ENCODE measurements at regions of chr3 and their contacts with region 1.

Region 1: DNA sequence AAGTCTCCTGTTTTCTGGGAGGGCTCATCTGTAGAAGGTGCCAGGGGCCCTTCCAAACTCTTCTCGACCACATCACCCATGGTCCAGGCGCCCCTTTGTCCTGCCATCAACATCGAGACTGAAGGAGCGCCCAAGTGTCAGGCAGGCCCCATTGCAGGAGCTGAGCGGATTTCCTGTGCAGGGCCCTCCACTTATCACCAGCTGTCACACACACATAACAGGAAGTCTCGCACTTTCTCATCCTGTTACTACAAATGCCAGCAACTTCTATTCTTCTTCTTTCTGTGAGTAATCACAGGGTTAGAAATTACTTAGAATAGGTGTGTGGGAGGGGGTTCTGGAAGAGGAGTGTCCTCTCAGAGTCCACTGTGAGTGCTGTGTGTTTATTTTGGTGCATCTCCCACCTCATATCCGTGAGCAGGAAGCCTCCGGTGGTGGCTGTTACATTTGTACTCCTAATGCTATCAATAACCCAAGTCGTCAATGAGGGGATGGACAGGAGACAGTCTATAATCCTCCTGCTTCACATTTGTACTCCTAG is at the start of gene KLHL6:
- DNase-seq: peak; percentile 81
- ATAC-seq: peak; percentile 83
- H3K4me3 ChIP-seq: peak within 1 kb of the TSS; percentile 67 to 92 (median 82)
- H3K4me3 Mint-ChIP-seq: peak within 1 kb of the TSS; percentile 94
- H3K27ac ChIP-seq: peak within 1 kb of the TSS; percentile 79 to 87
- H3K27ac Mint-ChIP-seq: peak within 1 kb of the TSS; percentile 99
- H3K4me1 ChIP-seq: peaks cover 39 to 50% of the 10 kb centered on the region in 2 donors
- H3K4me1 Mint-ChIP-seq: peaks cover 51% of the 10 kb centered on the region
- H3K27me3 ChIP-seq: no peaks in the 10 kb centered on the region
- H3K27me3 Mint-ChIP-seq: no peaks in the 10 kb centered on the region
- CTCF ChIP-seq: no peak
- total RNA-seq, gene KLHL6: 69.7 and 72.6 TPM in 2 replicates

Region 2: GRCh38 chr3:183481582-183481981 is 74.0 kb before region 1 on chr3:
- CTCF ChIA-PET with region 1: interaction called, 21 read pairs
- POLR2A ChIA-PET with region 1: no interaction called
- intact Hi-C with region 1: loop called (anchors 1 kb)
- DNase-seq: no peak
- ATAC-seq: no peak
- H3K4me3 ChIP-seq: no peak overlapping the region
- H3K4me3 Mint-ChIP-seq: no peak overlapping the region
- H3K27ac ChIP-seq: no peak overlapping the region
- H3K27ac Mint-ChIP-seq: no peak overlapping the region
- H3K4me1 ChIP-seq: peaks cover 0 to 5% of the 10 kb centered on the region in 2 donors
- H3K4me1 Mint-ChIP-seq: peaks cover 12% of the 10 kb centered on the region
- H3K27me3 ChIP-seq: no peaks in the 10 kb centered on the region
- H3K27me3 Mint-ChIP-seq: no peaks in the 10 kb centered on the region
- CTCF ChIP-seq: no peak

Region 3: DNA sequence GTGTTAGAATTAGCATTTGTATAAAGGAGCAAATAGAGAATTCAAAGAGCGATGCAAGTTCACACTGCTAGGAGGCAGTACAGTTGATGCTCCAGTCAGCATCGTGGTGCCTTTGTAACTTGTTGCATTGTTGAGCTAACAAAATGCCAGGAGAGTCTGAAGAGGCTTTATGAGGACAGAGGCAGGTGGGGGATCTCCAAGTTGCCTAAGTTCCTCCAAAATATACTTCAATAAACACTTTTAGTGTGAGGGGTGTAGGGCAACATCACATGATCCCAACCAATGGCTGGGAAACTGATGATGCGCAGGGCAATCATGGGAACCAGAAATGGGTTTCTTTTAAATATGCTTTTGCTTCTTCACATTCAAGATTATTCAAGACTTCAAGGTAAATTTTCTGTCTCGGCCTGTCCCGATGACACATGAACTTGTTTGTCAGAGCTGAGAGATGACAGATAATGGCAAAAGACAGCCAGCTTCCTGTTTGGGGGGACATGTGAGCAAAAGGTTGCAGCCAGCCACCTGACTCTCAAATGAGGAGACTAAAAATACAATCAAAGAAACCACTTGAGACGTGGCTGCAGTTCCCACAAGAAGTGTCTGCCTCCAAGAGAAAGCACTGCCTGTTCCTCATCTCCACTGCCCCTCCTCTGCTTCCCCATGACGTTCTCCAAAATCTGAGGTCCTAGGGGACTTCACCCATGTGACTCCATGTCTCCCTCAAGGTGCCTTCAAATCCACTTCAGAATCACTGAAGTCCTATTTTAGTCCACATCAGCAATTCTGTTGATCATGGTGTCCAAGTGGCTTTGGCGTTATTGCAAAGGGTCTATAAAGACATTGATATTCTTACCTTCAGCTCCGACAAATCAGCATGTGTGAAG is 39.4 kb before region 1 on chr3:
- CTCF ChIA-PET with region 1: interaction called, 17 read pairs
- POLR2A ChIA-PET with region 1: no interaction called
- intact Hi-C with region 1: loop called (anchors 1 kb)
- DNase-seq: peak; percentile 85
- ATAC-seq: peak; percentile 70
- H3K4me3 ChIP-seq: no peak overlapping the region
- H3K4me3 Mint-ChIP-seq: peak overlapping the region; percentile 78
- H3K27ac ChIP-seq: peak overlapping the region; percentile 53 to 86
- H3K27ac Mint-ChIP-seq: peak overlapping the region; percentile 95
- H3K4me1 ChIP-seq: peaks cover 58 to 69% of the 10 kb centered on the region in 2 donors
- H3K4me1 Mint-ChIP-seq: peaks cover 85% of the 10 kb centered on the region
- H3K27me3 ChIP-seq: no peaks in the 10 kb centered on the region
- H3K27me3 Mint-ChIP-seq: no peaks in the 10 kb centered on the region
- CTCF ChIP-seq: peak; percentile 36

Region 4: GRCh38 chr3:183537295-183537730 is 18.3 kb before region 1 on chr3:
- CTCF ChIA-PET with region 1: interaction called, 12 read pairs
- POLR2A ChIA-PET with region 1: interaction called, 11 read pairs
- intact Hi-C with region 1: loop called (anchors 1 kb)
- DNase-seq: no peak
- ATAC-seq: no peak
- H3K4me3 ChIP-seq: no peak overlapping the region
- H3K4me3 Mint-ChIP-seq: peak overlapping the region; percentile 77
- H3K27ac ChIP-seq: peak overlapping the region in 1 of 2 donors; percentile 56
- H3K27ac Mint-ChIP-seq: peak overlapping the region; percentile 94
- H3K4me1 ChIP-seq: peaks cover 80 to 96% of the 10 kb centered on the region in 2 donors
- H3K4me1 Mint-ChIP-seq: peaks cover 90% of the 10 kb centered on the region
- H3K27me3 ChIP-seq: no peaks in the 10 kb centered on the region
- H3K27me3 Mint-ChIP-seq: no peaks in the 10 kb centered on the region
- CTCF ChIP-seq: no peak

Region 5: DNA sequence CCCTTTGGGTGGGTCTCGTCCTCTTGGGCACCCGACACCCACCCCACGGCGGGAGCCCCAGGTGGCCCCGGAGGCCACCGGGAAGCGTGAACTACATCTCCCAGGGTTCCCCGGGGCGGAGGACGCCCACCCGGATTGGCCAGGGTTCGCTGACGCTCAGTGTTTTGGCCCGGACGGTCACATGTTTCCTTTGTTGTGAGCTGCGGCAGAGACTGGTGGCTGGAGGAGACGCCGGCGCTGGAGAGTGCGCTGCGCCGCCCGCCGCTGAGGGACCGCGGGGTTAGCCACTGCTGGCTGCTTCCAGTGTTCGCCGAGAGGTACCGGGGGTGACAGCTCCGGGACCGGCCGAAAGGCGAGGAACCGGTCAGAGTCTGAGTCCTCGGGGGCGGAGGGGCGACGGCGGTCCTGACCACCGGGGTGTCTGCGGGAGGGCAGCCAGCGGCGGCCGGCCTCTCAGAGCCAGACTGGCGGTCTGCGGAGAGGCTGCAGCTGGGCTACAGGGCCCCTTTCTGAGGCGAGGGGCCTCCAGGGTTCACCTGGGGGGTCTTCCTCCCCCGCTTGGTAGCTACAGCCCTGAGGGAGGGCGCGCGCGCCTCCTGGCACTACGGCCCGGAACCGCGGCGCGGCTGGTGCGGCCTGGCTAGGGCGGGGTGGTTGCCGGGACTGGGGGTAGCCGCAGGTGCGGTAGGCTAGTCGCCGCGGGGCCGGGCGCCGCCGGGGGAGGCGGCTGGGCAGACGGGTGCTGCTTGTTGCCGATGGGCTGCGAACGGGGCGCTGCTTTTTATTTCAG is 80.0 kb after region 1 on chr3 and contains the start of gene KLHL24:
- CTCF ChIA-PET with region 1: interaction called, 3 read pairs
- POLR2A ChIA-PET with region 1: interaction called, 3 read pairs
- intact Hi-C with region 1: loop called (anchors 1 kb)
- DNase-seq: peak; percentile 93
- ATAC-seq: peak; percentile 71
- H3K4me3 ChIP-seq: peak within 1 kb of the TSS; percentile 77 to 98 (median 91)
- H3K4me3 Mint-ChIP-seq: peak within 1 kb of the TSS; percentile 88
- H3K27ac ChIP-seq: peak within 1 kb of the TSS; percentile 96 to 99
- H3K27ac Mint-ChIP-seq: peak within 1 kb of the TSS; percentile 90
- H3K4me1 ChIP-seq: peaks cover 18 to 25% of the 10 kb centered on the region in 2 donors
- H3K4me1 Mint-ChIP-seq: peaks cover 28% of the 10 kb centered on the region
- H3K27me3 ChIP-seq: no peaks in the 10 kb centered on the region
- H3K27me3 Mint-ChIP-seq: no peaks in the 10 kb centered on the region
- CTCF ChIP-seq: no peak
- total RNA-seq, gene KLHL24: 134 and 139 TPM in 2 replicates

Region 6: DNA sequence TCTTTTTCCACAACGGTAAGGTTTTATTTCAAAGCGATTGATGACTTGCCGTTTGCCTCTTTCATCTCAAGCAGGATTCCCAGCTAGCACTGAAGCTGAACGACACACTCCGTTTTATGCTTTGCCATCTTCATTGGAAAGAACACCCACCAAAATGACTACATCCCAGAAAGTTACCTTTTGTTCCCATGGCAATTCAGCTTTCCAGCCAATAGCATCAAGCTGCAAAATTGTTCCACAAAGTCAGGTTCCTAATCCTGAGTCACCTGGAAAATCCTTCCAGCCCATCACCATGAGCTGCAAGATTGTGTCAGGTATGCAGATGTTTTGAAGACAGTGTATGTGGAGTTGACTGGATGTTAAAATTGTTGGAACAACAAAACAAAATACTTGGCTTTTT is 198.4 kb after region 1 on chr3:
- CTCF ChIA-PET with region 1: no interaction called
- POLR2A ChIA-PET with region 1: no interaction called
- intact Hi-C with region 1: no loop called
- DNase-seq: no peak
- ATAC-seq: no peak
- H3K4me3 ChIP-seq: no peak overlapping the region
- H3K4me3 Mint-ChIP-seq: no peak overlapping the region
- H3K27ac ChIP-seq: no peak overlapping the region
- H3K27ac Mint-ChIP-seq: no peak overlapping the region
- H3K4me1 ChIP-seq: no peaks in the 10 kb centered on the region
- H3K4me1 Mint-ChIP-seq: no peaks in the 10 kb centered on the region
- H3K27me3 ChIP-seq: no peaks in the 10 kb centered on the region
- H3K27me3 Mint-ChIP-seq: no peaks in the 10 kb centered on the region
- CTCF ChIP-seq: no peak

Region 7: GRCh38 chr3:183766745-183767606 is 211.4 kb after region 1 on chr3:
- CTCF ChIA-PET with region 1: interaction called, 5 read pairs
- POLR2A ChIA-PET with region 1: no interaction called
- intact Hi-C with region 1: loop called (anchors 5 kb)
- DNase-seq: peak; percentile 78
- ATAC-seq: peak; percentile 79
- H3K4me3 ChIP-seq: no peak overlapping the region
- H3K4me3 Mint-ChIP-seq: no peak overlapping the region
- H3K27ac ChIP-seq: no peak overlapping the region
- H3K27ac Mint-ChIP-seq: no peak overlapping the region
- H3K4me1 ChIP-seq: peaks cover 9% of the 10 kb centered on the region in 2 donors
- H3K4me1 Mint-ChIP-seq: peaks cover 11% of the 10 kb centered on the region
- H3K27me3 ChIP-seq: no peaks in the 10 kb centered on the region
- H3K27me3 Mint-ChIP-seq: no peaks in the 10 kb centered on the region
- CTCF ChIP-seq: peak; percentile 83